Panc1 (cell line): ENCODE measurements at regions of chr19 and their contacts with region 1.

Region 1: DNA sequence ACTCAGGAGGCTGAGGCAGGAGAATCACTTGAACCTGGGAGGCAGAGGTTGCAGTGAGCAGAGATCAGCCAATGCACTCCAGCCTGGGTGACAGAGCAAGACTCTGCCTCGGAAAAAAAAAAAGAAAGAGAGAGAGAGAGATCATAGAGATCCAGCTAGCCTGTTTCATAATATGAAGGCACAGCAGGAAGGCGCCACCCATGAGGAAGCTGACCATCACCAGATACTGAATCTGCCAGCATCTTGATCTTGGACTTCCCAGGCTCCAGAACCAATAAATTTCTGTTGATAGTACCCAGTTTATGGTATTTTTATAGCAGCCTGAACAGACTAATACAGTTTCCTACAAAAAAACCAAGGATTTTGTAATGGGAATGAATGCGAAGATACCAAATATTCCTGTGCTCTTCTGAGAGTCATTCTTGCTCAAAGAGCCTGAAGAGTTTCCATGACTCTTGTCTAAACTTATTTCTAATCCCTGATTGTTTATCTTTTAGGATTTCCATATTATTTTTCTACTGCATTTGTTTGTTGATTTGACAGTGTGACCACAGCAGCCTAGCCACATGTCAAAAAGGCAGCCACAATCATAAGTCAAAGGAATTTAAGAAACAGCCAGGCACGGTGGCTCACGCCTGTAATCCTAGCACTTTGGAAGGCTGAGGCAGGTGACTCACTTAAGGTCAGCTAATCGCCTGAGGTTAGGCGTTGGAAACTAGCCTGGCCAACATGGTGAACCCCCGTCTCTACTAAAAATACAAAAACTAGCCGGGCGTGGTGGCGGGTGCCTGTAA is 37.7 kb upstream of the PDCD5 start:
- DNase-seq: no peak
- ATAC-seq: peak; percentile 85
- H3K4me3 ChIP-seq: no peak overlapping the region
- H3K27ac ChIP-seq: no peak overlapping the region
- H3K4me1 ChIP-seq: no peaks in the 10 kb centered on the region
- H3K27me3 ChIP-seq: no peaks in the 10 kb centered on the region
- CTCF ChIP-seq: no peak

Region 2: DNA sequence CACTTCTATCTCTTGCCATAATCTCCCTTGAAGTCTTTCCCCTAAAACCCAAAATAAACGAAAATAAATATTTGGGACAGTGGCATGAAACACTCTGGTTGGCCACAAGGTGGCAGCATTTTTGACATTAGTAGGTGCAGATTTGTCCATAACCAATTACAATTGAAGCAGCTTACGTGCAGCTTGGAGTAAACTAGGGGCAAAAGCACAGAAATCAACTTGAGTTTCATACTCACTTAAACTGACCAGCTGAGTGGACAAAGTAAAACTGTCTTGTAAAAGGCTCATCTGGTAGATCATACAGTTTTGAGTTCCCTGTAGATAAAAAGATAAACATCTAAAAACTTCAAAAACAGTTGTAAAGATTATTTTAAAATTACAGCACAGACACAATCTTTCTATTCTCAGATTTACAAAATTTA is 56.4 kb after region 1 on chr19:
- CTCF ChIA-PET with region 1: no interaction called
- POLR2A ChIA-PET with region 1: no interaction called
- in situ Hi-C with region 1: no loop called
- intact Hi-C with region 1: no loop called
- DNase-seq: peak; percentile 13
- ATAC-seq: peak; percentile 82
- H3K4me3 ChIP-seq: no peak overlapping the region
- H3K27ac ChIP-seq: no peak overlapping the region
- H3K4me1 ChIP-seq: no peaks in the 10 kb centered on the region
- H3K27me3 ChIP-seq: no peaks in the 10 kb centered on the region
- CTCF ChIP-seq: peak; percentile 93

Region 3: DNA sequence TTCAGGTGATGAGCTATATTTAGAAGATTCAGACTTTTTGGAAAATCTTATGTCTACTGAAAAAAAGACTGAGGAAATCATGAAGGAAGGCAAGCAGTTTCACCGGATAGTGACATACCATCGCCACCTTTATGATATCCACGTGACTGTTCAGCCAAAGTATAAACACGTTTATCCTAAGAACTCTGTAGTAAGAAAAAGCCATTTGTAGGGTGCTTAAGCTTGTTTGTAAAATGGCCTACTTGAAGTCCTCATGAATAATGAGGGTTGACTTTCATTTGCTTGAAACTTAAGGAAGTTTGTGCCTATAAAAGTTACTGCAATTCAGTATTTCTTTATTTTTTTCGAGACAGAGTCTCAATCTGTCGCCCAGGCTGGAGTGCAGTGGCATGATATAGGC is 168.4 kb after region 1 on chr19:
- CTCF ChIA-PET with region 1: interaction called, 12 read pairs
- POLR2A ChIA-PET with region 1: no interaction called
- in situ Hi-C with region 1: no loop called
- intact Hi-C with region 1: no loop called
- DNase-seq: no peak
- ATAC-seq: no peak
- H3K4me3 ChIP-seq: no peak overlapping the region
- H3K27ac ChIP-seq: no peak overlapping the region
- H3K4me1 ChIP-seq: no peaks in the 10 kb centered on the region
- H3K27me3 ChIP-seq: no peaks in the 10 kb centered on the region
- CTCF ChIP-seq: no peak